IMR-90 (cell line): ENCODE measurements at regions of chr20 and their contacts with region 1.

Region 1: GRCh38 chr20:462199-462991 is at the start of gene TBC1D20:
- DNase-seq: peak; percentile 84
- ATAC-seq: peak; percentile 95
- H3K4me3 ChIP-seq: peak within 1 kb of the TSS; percentile 95
- H3K27ac ChIP-seq: peak within 1 kb of the TSS; percentile 68
- H3K4me1 ChIP-seq: peaks cover 7% of the 10 kb centered on the region
- H3K27me3 ChIP-seq: no peaks in the 10 kb centered on the region
- CTCF ChIP-seq: peak; percentile 37; the same call in 1 of the 2 replicates
- POLR2A ChIP-seq: peak; percentile 84
- RAD21 ChIP-seq: no peak
- total RNA-seq, gene TBC1D20: 36.7 and 42.8 TPM in 2 replicates

Region 2: GRCh38 chr20:444862-445426 is 17.5 kb before region 1 on chr20:
- CTCF ChIA-PET with region 1: no interaction called
- POLR2A ChIA-PET with region 1: no interaction called
- dilution Hi-C with region 1: no loop called
- in situ Hi-C with region 1: no loop called
- intact Hi-C with region 1: loop called (anchors 1 kb)
- DNase-seq: peak; percentile 60
- ATAC-seq: peak; percentile 72
- H3K4me3 ChIP-seq: no peak overlapping the region
- H3K27ac ChIP-seq: peak overlapping the region; percentile 10; the same call in 1 of the 2 replicates
- H3K4me1 ChIP-seq: peaks cover 5% of the 10 kb centered on the region
- H3K27me3 ChIP-seq: no peaks in the 10 kb centered on the region
- CTCF ChIP-seq: no peak
- POLR2A ChIP-seq: no peak
- RAD21 ChIP-seq: no peak

Region 3: DNA sequence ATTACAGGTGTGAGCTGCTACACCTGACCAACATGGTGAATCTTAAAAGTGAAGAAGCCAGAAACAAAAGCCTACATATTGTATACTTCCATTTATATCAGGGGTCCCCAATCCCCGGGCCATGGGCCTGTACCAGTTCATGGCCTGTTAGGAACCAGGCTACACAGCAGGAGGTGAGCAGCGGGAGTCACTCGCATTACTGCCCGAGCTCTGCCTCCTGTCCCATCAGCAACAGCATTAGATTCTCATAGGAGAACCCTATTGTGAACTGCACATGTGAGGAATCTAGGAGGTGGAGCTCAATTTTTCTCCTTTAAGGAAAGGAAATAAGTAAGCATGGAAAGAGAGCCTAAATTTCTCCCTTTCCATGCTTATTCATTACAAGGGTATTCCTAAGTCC is 59.5 kb after region 1 on chr20:
- CTCF ChIA-PET with region 1: no interaction called
- POLR2A ChIA-PET with region 1: no interaction called
- dilution Hi-C with region 1: no loop called
- in situ Hi-C with region 1: no loop called
- intact Hi-C with region 1: loop called (anchors 2 kb)
- DNase-seq: no peak
- ATAC-seq: no peak
- H3K4me3 ChIP-seq: no peak overlapping the region
- H3K27ac ChIP-seq: no peak overlapping the region
- H3K4me1 ChIP-seq: no peaks in the 10 kb centered on the region; the same call in 1 of the 2 replicates
- H3K27me3 ChIP-seq: no peaks in the 10 kb centered on the region
- CTCF ChIP-seq: no peak
- POLR2A ChIP-seq: no peak
- RAD21 ChIP-seq: no peak

Region 4: GRCh38 chr20:675453-676314 is 213.3 kb after region 1 on chr20 and contains the start of gene SCRT2:
- CTCF ChIA-PET with region 1: no interaction called
- POLR2A ChIA-PET with region 1: interaction called, 20 read pairs
- dilution Hi-C with region 1: no loop called
- in situ Hi-C with region 1: no loop called
- intact Hi-C with region 1: no loop called
- DNase-seq: peak; percentile 65
- ATAC-seq: peak; percentile 100
- H3K4me3 ChIP-seq: no peak within 1 kb of the TSS
- H3K27ac ChIP-seq: no peak within 1 kb of the TSS
- H3K4me1 ChIP-seq: no peaks in the 10 kb centered on the region
- H3K27me3 ChIP-seq: peaks cover 55% of the 10 kb centered on the region
- CTCF ChIP-seq: no peak
- POLR2A ChIP-seq: no peak
- RAD21 ChIP-seq: no peak
- total RNA-seq, gene SCRT2: not detected in 2 replicates